Transverse colon (tissue), 4 donors: ENCODE measurements at regions of chr14 and their contacts with region 1.

Region 1: DNA sequence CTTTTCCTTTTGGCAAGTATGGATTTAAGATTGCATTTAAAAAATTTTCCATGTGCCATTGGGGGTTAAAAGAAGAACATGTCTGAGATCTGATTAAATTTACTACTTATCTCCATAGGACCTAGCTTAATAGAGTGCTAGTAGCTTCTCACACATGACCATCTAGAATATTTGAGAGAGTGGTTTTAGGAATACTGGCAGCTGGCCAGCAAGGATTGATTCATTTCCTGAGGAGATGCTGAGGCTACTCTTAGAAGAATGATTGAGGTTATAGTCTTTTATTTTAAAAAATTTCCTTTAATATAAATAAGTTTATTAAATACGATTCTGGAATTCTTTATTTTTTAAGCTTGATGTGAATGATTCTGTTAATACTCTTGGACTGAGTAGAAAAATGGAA is 56.2 kb downstream of the MIPOL1 start:
- DNase-seq: no peak
- H3K4me3 ChIP-seq: no peak overlapping the region
- H3K27ac ChIP-seq: no peak overlapping the region
- H3K4me1 ChIP-seq: no peaks in the 10 kb centered on the region
- H3K27me3 ChIP-seq: no peaks in the 10 kb centered on the region
- CTCF ChIP-seq: no peak
- EP300 ChIP-seq: no peak
- POLR2A ChIP-seq: no peak

Region 2: DNA sequence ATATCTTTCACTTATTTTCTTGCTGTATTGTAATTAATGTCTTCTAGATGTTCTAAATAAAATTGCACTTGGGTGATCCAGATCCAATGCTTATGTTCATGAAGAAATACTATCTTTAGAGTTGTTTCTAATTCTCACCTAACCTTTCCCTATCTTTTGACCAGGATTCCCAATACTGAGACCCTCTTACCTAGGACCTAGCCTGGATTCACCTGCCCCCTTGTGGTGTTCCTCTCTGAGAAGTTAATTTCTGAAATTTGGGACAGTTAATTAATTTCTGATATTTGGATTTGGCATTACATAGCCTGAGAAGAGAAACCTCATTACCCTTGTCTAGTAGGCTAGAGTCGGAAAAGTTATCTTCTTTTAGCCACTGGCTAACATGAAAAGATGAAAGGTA is 311.6 kb after region 1 on chr14:
- in situ Hi-C with region 1: loop called in 2 of 4 experiments (anchors 10 to 25 kb)
- intact Hi-C with region 1: no loop called
- DNase-seq: no peak
- H3K4me3 ChIP-seq: peak overlapping the region in 3 of 4 donors; percentile 19 to 28 (median 23)
- H3K27ac ChIP-seq: peak overlapping the region; percentile 59 to 81 (median 73)
- H3K4me1 ChIP-seq: peaks cover 0 to 17% (median 9%) of the 10 kb centered on the region in 4 donors
- H3K27me3 ChIP-seq: no peaks in the 10 kb centered on the region
- CTCF ChIP-seq: peak; percentile 25 to 65 (median 38)
- EP300 ChIP-seq: no peak
- POLR2A ChIP-seq: no peak